ENCODE measurements at regions of chr14 and their contacts with region 1.

Region 1: DNA sequence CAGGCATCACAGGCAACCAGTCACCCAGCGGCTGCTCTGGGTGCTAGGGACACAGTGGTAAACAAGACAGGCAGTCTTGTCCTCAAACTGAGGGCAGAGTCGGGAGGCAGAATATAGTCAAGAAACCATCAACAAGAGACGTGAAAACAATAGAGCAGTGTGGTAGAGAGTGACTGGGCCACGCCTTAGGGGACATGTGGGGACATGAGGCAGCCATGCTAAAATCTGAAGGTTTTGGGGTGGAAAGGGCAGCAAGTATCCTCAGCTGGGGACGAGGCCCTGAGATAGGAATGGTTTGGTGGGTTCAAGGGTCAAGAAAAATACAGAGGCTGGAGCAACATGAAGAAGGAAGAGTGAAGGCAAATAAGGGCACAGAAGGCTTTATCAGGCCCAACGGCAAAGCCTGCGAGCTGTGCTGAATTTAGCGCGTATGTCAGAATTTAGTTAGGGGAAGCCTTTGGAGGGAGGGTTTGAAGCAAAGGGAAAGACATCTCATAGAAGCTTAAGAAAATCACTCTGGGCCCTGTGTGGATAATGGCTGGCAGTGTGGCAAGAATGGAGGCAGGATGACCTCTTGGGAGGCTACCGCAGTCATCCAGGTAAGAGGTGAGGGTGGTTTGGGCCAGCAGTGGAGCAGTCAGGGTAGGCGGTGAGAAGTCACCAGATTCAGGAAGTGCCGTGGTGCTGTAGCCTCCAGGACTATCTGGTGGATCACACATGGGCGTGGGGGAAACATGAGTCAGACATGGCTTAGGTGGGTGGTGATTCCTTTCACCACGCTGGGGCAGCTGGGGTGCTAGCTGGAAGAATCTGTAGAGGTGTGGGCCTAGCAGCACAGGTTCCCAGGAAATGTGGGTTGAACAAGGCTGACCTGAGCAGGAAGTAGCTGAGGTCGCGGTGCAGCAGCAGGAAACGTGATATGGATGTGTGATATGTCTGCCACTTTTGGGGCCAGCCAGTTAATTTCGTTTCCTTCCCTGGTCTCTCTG is 3.0 kb downstream of the EVL start:
- DNase-seq: peak; percentile 56 to 92 (median 89)
- ATAC-seq: peak; percentile 74
- H3K4me3 ChIP-seq: peak overlapping the region; percentile 85
- H3K4me3 Mint-ChIP-seq: peak overlapping the region; percentile 92 to 99 (median 95)
- H3K27ac ChIP-seq: peak overlapping the region; percentile 98
- H3K27ac Mint-ChIP-seq: peak overlapping the region; percentile 96 to 100 (median 98)
- H3K4me1 ChIP-seq: peaks cover 42 to 60% of the 10 kb centered on the region in 2 donors
- H3K4me1 Mint-ChIP-seq: peaks cover 42 to 73% (median 61%) of the 10 kb centered on the region in 7 donors
- H3K27me3 ChIP-seq: no peaks in the 10 kb centered on the region
- H3K27me3 Mint-ChIP-seq: peaks cover 0 to 2% (median 0%) of the 10 kb centered on the region in 5 donors

Region 2: DNA sequence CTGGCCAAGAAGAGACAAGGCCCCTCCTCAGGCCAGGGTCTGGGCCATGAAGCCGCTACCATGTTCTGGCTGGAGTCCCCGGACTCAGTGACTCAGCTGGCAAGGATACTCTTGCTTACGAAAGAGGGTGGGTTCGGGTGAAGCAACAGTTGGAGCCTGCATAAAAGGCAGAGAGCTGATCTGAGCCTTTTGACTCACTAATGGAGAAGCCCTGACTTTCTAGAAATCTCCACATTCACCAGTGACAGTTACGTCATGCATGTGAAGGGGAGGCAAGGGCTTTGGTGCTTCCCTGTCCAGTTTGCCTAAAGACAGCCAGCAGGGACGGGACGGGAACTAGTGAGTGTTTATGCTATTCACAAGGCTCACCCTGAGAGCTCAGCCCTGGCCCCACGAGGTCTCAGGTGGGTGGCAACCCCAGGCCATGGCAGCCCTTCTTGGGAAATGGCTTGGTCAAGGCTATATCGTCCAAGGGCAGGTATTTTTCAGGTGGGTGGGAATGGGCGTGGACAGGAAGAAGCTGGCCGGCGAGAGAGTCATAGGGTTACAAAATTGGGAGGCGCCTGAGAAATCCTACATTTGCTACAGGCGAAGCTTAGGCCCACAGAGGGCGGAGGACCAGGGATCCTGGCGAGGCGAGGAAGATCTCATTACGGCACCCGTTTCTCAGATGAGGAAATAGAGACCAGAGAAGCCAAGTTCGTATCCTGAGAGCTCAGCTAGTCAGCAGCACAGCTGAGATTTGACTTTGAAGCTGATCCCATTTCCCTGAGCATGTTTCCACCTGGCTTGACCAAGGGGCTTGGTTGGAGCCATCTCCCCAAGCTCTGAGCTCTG is 1110.8 kb before region 1 on chr14:
- CTCF ChIA-PET with region 1: no interaction called
- POLR2A ChIA-PET with region 1: no interaction called
- intact Hi-C with region 1: no loop called
- DNase-seq: no peak
- ATAC-seq: peak; percentile 82
- H3K4me3 ChIP-seq: no peak overlapping the region
- H3K4me3 Mint-ChIP-seq: no peak overlapping the region
- H3K27ac ChIP-seq: no peak overlapping the region
- H3K27ac Mint-ChIP-seq: no peak overlapping the region
- H3K4me1 ChIP-seq: no peaks in the 10 kb centered on the region
- H3K4me1 Mint-ChIP-seq: peaks cover 3 to 30% (median 23%) of the 10 kb centered on the region in 7 donors
- H3K27me3 ChIP-seq: no peaks in the 10 kb centered on the region
- H3K27me3 Mint-ChIP-seq: peaks cover 0 to 3% (median 0%) of the 10 kb centered on the region in 5 donors

Region 3: DNA sequence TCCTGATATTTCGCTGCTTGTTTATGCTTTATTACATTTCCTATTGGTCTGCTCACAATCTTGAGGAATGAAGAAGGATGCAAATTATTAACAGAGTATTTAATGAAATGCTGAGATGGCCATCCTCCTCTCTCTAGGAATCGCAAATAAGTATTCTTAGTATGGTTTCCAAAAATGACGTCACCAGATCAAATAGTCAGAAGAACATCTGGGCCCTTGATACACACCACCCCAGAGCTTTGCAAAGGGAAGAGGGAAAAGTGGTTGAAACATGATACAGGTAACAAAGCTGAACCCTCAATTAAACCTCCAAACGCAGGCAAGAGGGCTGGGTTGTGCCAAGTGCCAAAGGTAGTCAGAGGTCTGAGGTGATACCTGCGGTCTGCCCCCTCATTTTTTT is 903.6 kb before region 1 on chr14:
- CTCF ChIA-PET with region 1: no interaction called
- POLR2A ChIA-PET with region 1: no interaction called
- intact Hi-C with region 1: no loop called
- DNase-seq: no peak
- ATAC-seq: no peak
- H3K4me3 ChIP-seq: no peak overlapping the region
- H3K4me3 Mint-ChIP-seq: peak overlapping the region in 1 of 10 donors; percentile 2
- H3K27ac ChIP-seq: no peak overlapping the region
- H3K27ac Mint-ChIP-seq: peak overlapping the region in 6 of 9 donors; percentile 2 to 73 (median 44)
- H3K4me1 ChIP-seq: no peaks in the 10 kb centered on the region
- H3K4me1 Mint-ChIP-seq: peaks cover 10 to 78% (median 54%) of the 10 kb centered on the region in 7 donors
- H3K27me3 ChIP-seq: no peaks in the 10 kb centered on the region
- H3K27me3 Mint-ChIP-seq: peaks cover 0 to 2% (median 0%) of the 10 kb centered on the region in 5 donors

Region 4: GRCh38 chr14:99230208-99231151 is 837.8 kb before region 1 on chr14:
- CTCF ChIA-PET with region 1: no interaction called
- POLR2A ChIA-PET with region 1: no interaction called
- intact Hi-C with region 1: loop called in 1 of 2 experiments (anchors 10 kb)
- DNase-seq: peak; percentile 54 to 91 (median 84)
- ATAC-seq: peak; percentile 82
- H3K4me3 ChIP-seq: peak overlapping the region; percentile 27
- H3K4me3 Mint-ChIP-seq: peak overlapping the region; percentile 79 to 94 (median 86)
- H3K27ac ChIP-seq: peak overlapping the region; percentile 98
- H3K27ac Mint-ChIP-seq: peak overlapping the region; percentile 94 to 100 (median 99)
- H3K4me1 ChIP-seq: peaks cover 94 to 96% of the 10 kb centered on the region in 2 donors
- H3K4me1 Mint-ChIP-seq: peaks cover 65 to 96% (median 92%) of the 10 kb centered on the region in 7 donors
- H3K27me3 ChIP-seq: no peaks in the 10 kb centered on the region
- H3K27me3 Mint-ChIP-seq: no peaks in the 10 kb centered on the region

Region 5: GRCh38 chr14:99982537-99983250 is 85.6 kb before region 1 on chr14:
- CTCF ChIA-PET with region 1: interaction called, 9 read pairs
- POLR2A ChIA-PET with region 1: interaction called, 9 read pairs
- intact Hi-C with region 1: loop called (anchors 2 to 5 kb)
- DNase-seq: peak; percentile 35 to 77 (median 72)
- ATAC-seq: peak; percentile 100
- H3K4me3 ChIP-seq: no peak overlapping the region
- H3K4me3 Mint-ChIP-seq: no peak overlapping the region
- H3K27ac ChIP-seq: no peak overlapping the region
- H3K27ac Mint-ChIP-seq: peak overlapping the region in 6 of 9 donors; percentile 3 to 85 (median 68)
- H3K4me1 ChIP-seq: peaks cover 0 to 15% of the 10 kb centered on the region in 2 donors
- H3K4me1 Mint-ChIP-seq: peaks cover 5 to 21% (median 19%) of the 10 kb centered on the region in 7 donors
- H3K27me3 ChIP-seq: no peaks in the 10 kb centered on the region
- H3K27me3 Mint-ChIP-seq: no peaks in the 10 kb centered on the region

Region 6: DNA sequence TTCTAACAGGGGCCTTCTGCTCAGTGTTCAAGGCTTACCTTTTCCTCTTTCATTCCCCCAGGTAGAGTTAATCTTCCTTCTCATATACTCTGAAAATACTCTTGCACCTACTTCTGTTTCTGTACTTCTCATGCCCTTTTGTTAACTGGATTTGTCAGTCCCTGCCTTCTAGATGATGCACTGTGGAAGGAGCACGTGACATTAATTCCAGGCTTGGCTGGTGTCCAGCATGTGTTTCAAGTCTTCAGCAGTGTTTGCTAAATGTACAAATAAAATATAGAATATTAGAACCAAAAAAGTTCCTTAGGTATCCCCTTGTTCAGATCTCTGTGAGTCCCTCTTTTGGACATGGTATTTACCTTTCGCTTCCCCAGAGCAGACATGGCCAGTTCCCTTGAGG is 30.9 kb before region 1 on chr14:
- CTCF ChIA-PET with region 1: no interaction called
- POLR2A ChIA-PET with region 1: no interaction called
- intact Hi-C with region 1: no loop called
- DNase-seq: no peak
- ATAC-seq: no peak
- H3K4me3 ChIP-seq: no peak overlapping the region
- H3K4me3 Mint-ChIP-seq: no peak overlapping the region
- H3K27ac ChIP-seq: no peak overlapping the region
- H3K27ac Mint-ChIP-seq: peak overlapping the region in 2 of 9 donors; percentile 3 to 84
- H3K4me1 ChIP-seq: no peaks in the 10 kb centered on the region
- H3K4me1 Mint-ChIP-seq: peaks cover 1 to 8% (median 6%) of the 10 kb centered on the region in 7 donors
- H3K27me3 ChIP-seq: no peaks in the 10 kb centered on the region
- H3K27me3 Mint-ChIP-seq: no peaks in the 10 kb centered on the region

Region 7: GRCh38 chr14:100108042-100108825 is 40.0 kb after region 1 on chr14:
- CTCF ChIA-PET with region 1: interaction called, 758 read pairs
- POLR2A ChIA-PET with region 1: interaction called, 2,344 read pairs
- intact Hi-C with region 1: loop called (anchors 1 kb)
- DNase-seq: peak; percentile 76 to 88 (median 84)
- ATAC-seq: peak; percentile 80
- H3K4me3 ChIP-seq: no peak overlapping the region
- H3K4me3 Mint-ChIP-seq: peak overlapping the region; percentile 13 to 93 (median 64)
- H3K27ac ChIP-seq: peak overlapping the region; percentile 83
- H3K27ac Mint-ChIP-seq: peak overlapping the region; percentile 89 to 98 (median 96)
- H3K4me1 ChIP-seq: peaks cover 49 to 74% of the 10 kb centered on the region in 2 donors
- H3K4me1 Mint-ChIP-seq: peaks cover 72 to 91% (median 82%) of the 10 kb centered on the region in 7 donors
- H3K27me3 ChIP-seq: no peaks in the 10 kb centered on the region
- H3K27me3 Mint-ChIP-seq: no peaks in the 10 kb centered on the region

Region 8: GRCh38 chr14:100213956-100214774 is 145.9 kb after region 1 on chr14:
- CTCF ChIA-PET with region 1: interaction called, 4 read pairs
- POLR2A ChIA-PET with region 1: interaction called, 11 read pairs
- intact Hi-C with region 1: no loop called
- DNase-seq: peak; percentile 82 to 95 (median 90)
- ATAC-seq: peak; percentile 98
- H3K4me3 ChIP-seq: peak overlapping the region; percentile 90
- H3K4me3 Mint-ChIP-seq: peak overlapping the region; percentile 76 to 89 (median 85)
- H3K27ac ChIP-seq: peak overlapping the region; percentile 97
- H3K27ac Mint-ChIP-seq: peak overlapping the region; percentile 62 to 94 (median 92)
- H3K4me1 ChIP-seq: peaks cover 12 to 19% of the 10 kb centered on the region in 2 donors
- H3K4me1 Mint-ChIP-seq: peaks cover 10 to 39% (median 34%) of the 10 kb centered on the region in 7 donors
- H3K27me3 ChIP-seq: no peaks in the 10 kb centered on the region
- H3K27me3 Mint-ChIP-seq: no peaks in the 10 kb centered on the region

Region 9: DNA sequence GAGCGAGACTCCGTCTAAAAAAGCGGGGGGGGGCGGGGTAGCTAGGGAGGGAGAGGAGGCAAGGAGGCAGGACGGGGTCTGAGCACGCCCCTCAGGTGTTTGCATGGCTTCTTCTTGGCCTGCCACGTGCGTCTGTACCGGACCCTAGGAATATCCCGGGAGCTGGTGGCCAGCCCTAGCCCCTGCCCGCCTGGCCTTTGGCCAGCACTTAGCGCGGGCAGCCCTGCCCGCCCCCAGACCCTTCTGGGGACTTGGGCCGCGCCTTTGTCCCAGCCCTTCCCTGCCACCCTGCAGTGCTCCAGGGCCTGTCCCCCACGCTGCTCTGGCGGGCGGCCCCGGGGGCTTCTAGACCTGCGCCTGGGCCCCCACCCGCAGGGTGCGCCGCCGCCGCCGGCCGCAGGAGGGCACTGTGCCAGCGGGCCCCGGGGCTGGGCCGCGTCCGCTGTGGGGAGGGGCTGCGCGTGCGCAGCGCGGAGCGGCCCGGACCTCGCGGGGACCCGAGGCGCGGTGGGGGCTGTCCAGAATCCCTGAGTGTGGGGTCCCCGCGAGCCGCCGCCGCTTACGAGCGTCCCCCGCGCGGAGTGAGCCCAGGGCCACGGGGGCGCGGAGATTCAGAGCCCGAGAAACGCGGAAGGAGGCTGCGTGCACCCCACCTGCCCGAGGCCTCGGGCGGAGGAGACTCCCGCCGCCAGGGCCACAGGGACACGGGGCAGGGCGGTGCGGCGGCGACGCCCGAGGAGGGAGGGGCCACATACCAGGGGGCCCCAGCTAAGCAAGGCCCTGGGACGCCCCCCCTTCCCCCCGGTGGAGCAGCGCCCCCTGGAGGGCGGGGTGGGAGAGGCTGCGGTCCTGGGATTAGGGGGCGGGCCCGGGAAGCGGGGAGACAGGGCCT is 217.0 kb after region 1 on chr14:
- CTCF ChIA-PET with region 1: no interaction called
- POLR2A ChIA-PET with region 1: no interaction called
- intact Hi-C with region 1: loop called in 1 of 2 experiments (anchors 5 kb)
- DNase-seq: peak; percentile 71 to 92 (median 79)
- ATAC-seq: peak; percentile 97
- H3K4me3 ChIP-seq: peak overlapping the region; percentile 71
- H3K4me3 Mint-ChIP-seq: peak overlapping the region; percentile 27 to 91 (median 73)
- H3K27ac ChIP-seq: peak overlapping the region; percentile 85
- H3K27ac Mint-ChIP-seq: peak overlapping the region in 5 of 9 donors; percentile 9 to 87 (median 59)
- H3K4me1 ChIP-seq: peaks cover 0 to 6% of the 10 kb centered on the region in 2 donors
- H3K4me1 Mint-ChIP-seq: peaks cover 2 to 21% (median 8%) of the 10 kb centered on the region in 7 donors
- H3K27me3 ChIP-seq: no peaks in the 10 kb centered on the region
- H3K27me3 Mint-ChIP-seq: no peaks in the 10 kb centered on the region

Region 10: DNA sequence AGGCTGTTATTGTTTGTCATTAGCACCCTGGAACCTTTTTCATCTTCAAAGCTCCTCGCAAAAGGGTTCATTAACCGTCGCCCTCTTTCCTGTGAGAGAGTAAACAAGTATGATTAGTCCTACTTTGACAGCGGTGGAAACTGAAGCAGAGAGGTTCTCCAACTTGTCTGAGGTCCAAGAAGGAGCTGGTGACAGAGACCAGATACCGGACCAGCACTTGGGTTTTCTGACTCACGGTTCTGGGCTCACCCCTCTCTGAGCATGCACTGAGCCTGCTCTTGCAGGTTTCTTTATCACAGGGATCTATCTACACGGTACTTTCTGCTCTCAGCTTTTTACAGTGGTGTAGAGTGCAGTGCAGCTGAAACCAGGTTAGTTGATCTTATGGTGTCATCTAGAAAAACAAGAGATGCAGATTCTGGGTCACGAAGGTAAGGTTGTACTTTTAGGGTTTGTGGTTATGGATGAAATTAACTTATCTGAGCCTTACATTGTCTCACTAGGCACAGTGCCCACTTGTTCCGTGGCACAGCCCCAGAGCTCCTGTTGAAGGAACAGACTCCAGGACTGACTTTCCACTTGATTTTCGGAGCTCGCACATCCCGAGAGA is 1755.4 kb after region 1 on chr14:
- CTCF ChIA-PET with region 1: no interaction called
- POLR2A ChIA-PET with region 1: no interaction called
- intact Hi-C with region 1: loop called (anchors 5 kb)
- DNase-seq: peak in 8 of 9 donors; percentile 71 to 87 (median 82)
- ATAC-seq: peak; percentile 72
- H3K4me3 ChIP-seq: peak overlapping the region; percentile 67
- H3K4me3 Mint-ChIP-seq: peak overlapping the region; percentile 85 to 96 (median 90)
- H3K27ac ChIP-seq: peak overlapping the region; percentile 97
- H3K27ac Mint-ChIP-seq: peak overlapping the region; percentile 90 to 100 (median 99)
- H3K4me1 ChIP-seq: peaks cover 64 to 68% of the 10 kb centered on the region in 2 donors
- H3K4me1 Mint-ChIP-seq: peaks cover 65 to 91% (median 86%) of the 10 kb centered on the region in 7 donors
- H3K27me3 ChIP-seq: no peaks in the 10 kb centered on the region
- H3K27me3 Mint-ChIP-seq: peaks cover 0 to 2% (median 0%) of the 10 kb centered on the region in 5 donors

Measured in naive thymus-derived CD4-positive, alpha-beta T cell (primary cell).